ENCODE measurements at regions of chr12 and their contacts with region 1.

Region 1: GRCh38 chr12:56468216-56469006 is at the start of gene SPRYD4:
- DNase-seq: peak; percentile 70
- ATAC-seq: peak; percentile 92
- H3K4me3 ChIP-seq: peak within 1 kb of the TSS; percentile 76
- H3K27ac ChIP-seq: peak within 1 kb of the TSS; percentile 93
- H3K4me1 ChIP-seq: peaks cover 15% of the 10 kb centered on the region
- H3K27me3 ChIP-seq: no peaks in the 10 kb centered on the region
- CTCF ChIP-seq: peak; percentile 22 to 68 (median 27); a peak in 4 of 6 replicates
- EP300 ChIP-seq: no peak
- POLR2A ChIP-seq: peak; percentile 95
- RAD21 ChIP-seq: no peak
- polyA plus RNA-seq, gene SPRYD4: 4.8 to 6.0 TPM

Region 2: DNA sequence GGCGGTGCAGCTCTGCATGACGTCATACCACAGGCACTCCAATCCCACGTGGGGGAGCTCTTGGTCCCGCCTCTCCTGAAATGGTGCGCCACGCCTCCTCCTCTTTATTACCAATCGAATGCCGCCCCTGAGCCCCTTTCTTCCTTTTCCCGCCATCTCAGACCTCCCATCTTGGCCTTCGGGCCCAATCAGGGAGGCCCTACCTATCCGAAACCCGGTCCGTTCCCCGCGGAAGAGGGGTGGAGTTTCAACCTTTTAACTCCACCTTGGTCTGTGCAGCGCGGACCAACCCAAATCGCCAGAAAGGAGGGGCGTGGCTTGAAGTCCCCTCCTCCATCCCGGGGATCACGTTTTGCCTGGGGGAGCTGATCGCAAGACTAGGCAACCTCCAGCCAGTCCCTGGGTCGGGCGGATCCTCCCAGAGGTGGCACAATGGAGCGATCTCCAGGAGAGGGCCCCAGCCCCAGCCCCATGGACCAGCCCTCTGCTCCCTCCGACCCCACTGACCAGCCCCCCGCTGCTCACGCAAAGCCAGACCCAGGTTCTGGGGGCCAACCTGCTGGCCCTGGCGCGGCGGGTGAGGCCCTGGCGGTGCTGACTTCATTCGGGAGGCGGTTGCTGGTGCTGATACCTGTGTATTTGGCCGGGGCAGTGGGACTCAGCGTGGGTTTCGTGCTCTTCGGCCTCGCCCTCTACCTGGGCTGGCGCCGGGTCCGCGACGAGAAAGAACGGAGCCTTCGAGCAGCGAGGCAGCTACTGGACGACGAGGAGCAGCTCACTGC is 340.3 kb before region 1 on chr12 and contains the start of gene ESYT1:
- CTCF ChIA-PET with region 1: interaction called, 13 read pairs
- POLR2A ChIA-PET with region 1: interaction called, 5 read pairs
- RAD21 ChIA-PET with region 1: interaction called, 4 read pairs
- SMC1A ChIA-PET with region 1: interaction called, 4 read pairs
- in situ Hi-C with region 1: loop called (anchors 5 kb)
- intact Hi-C with region 1: loop called (anchors 5 kb)
- DNase-seq: peak; percentile 98
- ATAC-seq: peak; percentile 93
- H3K4me3 ChIP-seq: peak within 1 kb of the TSS; percentile 93
- H3K27ac ChIP-seq: peak within 1 kb of the TSS; percentile 72
- H3K4me1 ChIP-seq: peaks cover 24% of the 10 kb centered on the region
- H3K27me3 ChIP-seq: no peaks in the 10 kb centered on the region
- CTCF ChIP-seq: no peak
- EP300 ChIP-seq: peak in 1 of 2 experiments; percentile 17; a peak in 1 of 4 replicates
- POLR2A ChIP-seq: peak; percentile 87
- RAD21 ChIP-seq: no peak
- polyA plus RNA-seq, gene ESYT1: 55.6 to 57.9 TPM

Region 3: DNA sequence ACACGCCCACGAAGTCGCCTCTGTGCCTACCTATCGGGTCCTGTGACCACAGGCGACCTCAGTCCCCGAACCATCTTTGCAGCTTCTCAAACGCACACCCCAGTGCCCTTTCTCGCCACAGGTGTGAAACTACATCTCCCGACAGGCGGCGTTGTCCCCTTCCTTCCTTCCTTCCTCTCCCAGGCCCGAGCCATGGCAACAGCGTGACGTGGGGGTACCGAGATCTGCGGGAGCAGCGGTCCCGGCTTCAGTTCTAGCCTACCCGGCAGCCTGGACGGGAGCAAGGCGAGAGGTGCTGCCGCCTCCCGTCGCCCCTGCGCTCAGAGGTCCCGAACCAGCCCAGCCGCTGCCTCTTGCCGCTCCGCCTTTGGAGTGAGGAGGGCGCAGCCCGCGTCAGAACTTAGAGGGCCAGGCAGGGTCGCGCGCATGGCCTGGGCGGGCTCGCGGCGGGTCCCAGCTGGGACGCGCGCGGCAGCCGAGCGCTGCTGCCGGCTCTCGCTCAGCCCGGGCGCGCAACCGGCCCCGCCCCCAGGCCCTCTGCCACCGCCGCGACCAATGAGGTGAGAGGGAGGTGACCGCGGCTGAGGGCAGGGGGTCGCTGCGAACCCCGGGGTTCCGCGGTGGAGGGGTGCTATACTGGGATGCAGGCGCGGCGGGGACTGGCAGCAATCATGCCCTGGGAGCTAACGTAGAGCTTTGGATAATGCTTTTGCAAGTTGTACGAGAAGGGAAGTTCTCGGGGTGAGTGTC is 201.5 kb before region 1 on chr12 and contains the start of gene COQ10A:
- CTCF ChIA-PET with region 1: interaction called, 24 read pairs
- POLR2A ChIA-PET with region 1: no interaction called
- RAD21 ChIA-PET with region 1: interaction called, 5 read pairs
- SMC1A ChIA-PET with region 1: interaction called, 9 read pairs
- in situ Hi-C with region 1: no loop called
- intact Hi-C with region 1: loop called (anchors 10 kb)
- DNase-seq: peak; percentile 48
- ATAC-seq: peak; percentile 97
- H3K4me3 ChIP-seq: peak within 1 kb of the TSS; percentile 68
- H3K27ac ChIP-seq: peak within 1 kb of the TSS; percentile 41
- H3K4me1 ChIP-seq: peaks cover 4% of the 10 kb centered on the region
- H3K27me3 ChIP-seq: no peaks in the 10 kb centered on the region
- CTCF ChIP-seq: peak; percentile 53 to 62 (median 62)
- EP300 ChIP-seq: no peak
- POLR2A ChIP-seq: peak; percentile 97
- RAD21 ChIP-seq: peak; percentile 24; the same call in 1 of the 2 replicates
- polyA plus RNA-seq, gene COQ10A: 3.3 to 4.5 TPM

Region 4: DNA sequence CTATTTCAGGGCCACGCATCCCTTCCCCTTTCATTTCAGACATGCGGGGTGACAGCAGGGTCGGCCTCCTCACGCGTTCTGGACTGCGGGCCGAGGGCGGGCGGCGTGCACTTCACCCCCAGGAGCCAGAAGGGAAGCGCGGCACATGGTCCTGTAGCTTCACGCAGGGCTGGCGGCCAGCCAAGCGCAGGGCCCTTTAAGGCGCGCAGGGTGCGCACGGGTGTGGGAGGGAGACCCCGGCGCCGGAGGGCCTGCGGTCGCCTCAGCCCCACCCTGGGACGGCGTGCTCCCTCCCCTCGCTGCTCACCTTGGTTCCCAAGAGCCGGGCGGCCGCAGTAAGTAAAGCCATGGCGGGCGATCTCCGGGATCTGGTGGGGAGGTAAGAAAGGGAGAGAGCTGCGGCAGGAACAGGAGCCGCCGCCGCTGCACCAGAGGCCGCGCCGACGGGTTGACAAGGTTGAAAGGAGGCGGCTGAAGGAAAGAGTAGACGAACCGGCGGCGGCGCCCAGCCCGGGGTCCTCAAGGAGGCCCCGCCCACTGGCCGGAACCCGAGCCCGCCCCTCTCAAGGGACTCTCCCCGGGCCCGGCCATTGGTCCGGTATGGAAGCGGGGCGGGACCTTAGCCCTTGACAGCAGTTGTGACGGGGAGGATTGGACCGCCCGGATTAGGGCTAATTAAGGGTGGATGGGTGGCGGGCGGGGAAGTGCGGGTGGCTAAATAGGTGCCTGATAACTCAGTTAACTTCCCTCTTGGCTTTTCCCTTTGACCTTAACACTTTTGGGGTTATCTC is 168.4 kb before region 1 on chr12 and contains the start of gene CS:
- CTCF ChIA-PET with region 1: interaction called, 10 read pairs
- POLR2A ChIA-PET with region 1: interaction called, 6 read pairs
- RAD21 ChIA-PET with region 1: interaction called, 3 read pairs
- SMC1A ChIA-PET with region 1: interaction called, 14 read pairs
- in situ Hi-C with region 1: no loop called
- intact Hi-C with region 1: no loop called
- DNase-seq: peak; percentile 71
- ATAC-seq: peak; percentile 95
- H3K4me3 ChIP-seq: peak within 1 kb of the TSS; percentile 93
- H3K27ac ChIP-seq: peak within 1 kb of the TSS; percentile 85
- H3K4me1 ChIP-seq: peaks cover 32% of the 10 kb centered on the region
- H3K27me3 ChIP-seq: no peaks in the 10 kb centered on the region
- CTCF ChIP-seq: no peak
- EP300 ChIP-seq: no peak
- POLR2A ChIP-seq: peak; percentile 84
- RAD21 ChIP-seq: no peak
- polyA plus RNA-seq, gene CS: 64.9 to 104 TPM

Region 5: GRCh38 chr12:56346703-56347102 is 121.7 kb before region 1 on chr12:
- CTCF ChIA-PET with region 1: interaction called, 11 read pairs
- POLR2A ChIA-PET with region 1: no interaction called
- RAD21 ChIA-PET with region 1: no interaction called
- SMC1A ChIA-PET with region 1: interaction called, 7 read pairs
- in situ Hi-C with region 1: no loop called
- intact Hi-C with region 1: no loop called
- DNase-seq: no peak
- ATAC-seq: peak; percentile 40
- H3K4me3 ChIP-seq: no peak overlapping the region
- H3K27ac ChIP-seq: no peak overlapping the region
- H3K4me1 ChIP-seq: peaks cover 3% of the 10 kb centered on the region
- H3K27me3 ChIP-seq: no peaks in the 10 kb centered on the region
- CTCF ChIP-seq: peak in 2 of 3 experiments; percentile 5 to 17; a peak in 1 of 6 replicates
- EP300 ChIP-seq: no peak
- POLR2A ChIP-seq: 0 out of 2 replicates have a peak, but pooled peaks have one; percentile 0
- RAD21 ChIP-seq: no peak

Region 6: DNA sequence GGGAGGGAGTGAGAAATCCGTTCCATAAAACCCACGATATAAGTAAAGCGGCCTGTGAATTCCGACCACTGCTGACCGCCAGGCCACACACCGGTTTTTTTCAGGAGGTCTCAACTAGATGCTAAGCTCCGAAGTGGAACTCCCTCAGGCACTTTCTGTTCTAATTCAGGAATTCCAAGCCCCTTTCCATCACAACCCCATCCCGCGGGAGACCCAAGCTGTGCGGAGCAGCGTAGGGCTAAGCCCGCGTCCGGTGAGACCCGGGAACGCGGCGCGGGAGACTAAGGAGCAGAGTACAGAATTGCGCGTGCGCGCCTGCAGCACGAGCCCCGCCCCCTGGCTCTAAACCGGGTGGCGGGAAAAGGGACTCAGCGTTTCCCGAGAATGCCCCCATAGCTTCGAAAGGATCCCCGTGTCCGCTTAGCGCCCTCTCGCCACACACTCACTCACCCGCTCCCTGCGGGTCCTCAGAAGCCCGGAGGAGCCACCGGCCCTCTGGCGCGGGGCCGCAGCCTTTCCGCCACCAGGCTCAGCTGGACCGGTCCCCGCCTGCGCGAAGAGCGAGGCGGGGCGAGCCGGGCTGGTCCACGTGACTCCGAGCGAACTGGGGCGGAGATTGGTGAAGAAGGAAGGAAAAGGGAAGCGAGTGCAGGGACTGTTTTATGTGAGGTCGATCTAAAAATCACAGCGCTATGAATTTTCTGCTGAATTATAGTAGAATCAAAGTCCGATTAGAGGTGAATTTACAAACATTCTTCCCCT is 19.4 kb before region 1 on chr12 and contains the start of gene TIMELESS:
- CTCF ChIA-PET with region 1: interaction called, 89 read pairs
- POLR2A ChIA-PET with region 1: interaction called, 6 read pairs
- RAD21 ChIA-PET with region 1: interaction called, 12 read pairs
- SMC1A ChIA-PET with region 1: interaction called, 14 read pairs
- in situ Hi-C with region 1: no loop called
- intact Hi-C with region 1: no loop called
- DNase-seq: peak; percentile 77
- ATAC-seq: peak; percentile 98
- H3K4me3 ChIP-seq: peak within 1 kb of the TSS; percentile 91
- H3K27ac ChIP-seq: peak within 1 kb of the TSS; percentile 75
- H3K4me1 ChIP-seq: no peaks in the 10 kb centered on the region
- H3K27me3 ChIP-seq: no peaks in the 10 kb centered on the region
- CTCF ChIP-seq: no peak
- EP300 ChIP-seq: no peak
- POLR2A ChIP-seq: peak; percentile 91
- RAD21 ChIP-seq: no peak
- polyA plus RNA-seq, gene TIMELESS: 10.4 to 20.5 TPM

Region 7: DNA sequence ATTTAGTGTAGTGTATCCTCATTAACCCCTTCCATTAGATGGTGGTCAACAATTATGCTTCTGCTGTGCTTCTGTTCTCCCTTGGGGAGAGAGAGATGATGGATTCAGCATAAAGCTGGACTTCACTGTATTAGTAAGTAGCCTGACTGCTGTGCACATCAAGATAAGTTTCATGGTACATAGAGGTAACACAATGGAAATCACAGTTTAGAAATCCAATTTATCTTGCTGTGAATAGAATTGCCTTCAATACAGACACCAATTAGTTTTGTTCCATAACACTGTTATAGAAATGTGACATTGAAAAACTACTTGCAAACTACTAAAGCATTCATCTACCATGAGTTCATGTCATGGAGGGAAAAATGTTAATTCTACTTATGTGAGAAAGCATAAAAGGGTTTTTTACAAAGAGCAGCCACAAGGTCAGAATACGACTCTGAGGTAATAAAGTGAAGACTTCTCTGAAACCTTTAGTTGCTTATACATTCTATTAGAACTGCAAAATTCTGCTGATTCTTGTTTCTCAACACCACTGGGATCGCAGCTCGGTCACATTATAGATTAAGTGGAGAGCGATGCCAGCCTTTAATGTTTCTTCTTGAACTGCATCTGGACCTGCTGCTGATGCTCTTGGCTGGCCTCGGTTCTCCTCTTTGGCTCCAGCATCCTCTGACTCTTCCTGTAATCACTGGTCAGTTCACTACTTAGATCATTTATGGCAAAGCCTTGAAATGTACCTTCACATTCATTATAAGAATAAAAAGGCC is 1663.8 kb after region 1 on chr12:
- CTCF ChIA-PET with region 1: no interaction called
- POLR2A ChIA-PET with region 1: no interaction called
- RAD21 ChIA-PET with region 1: no interaction called
- SMC1A ChIA-PET with region 1: no interaction called
- in situ Hi-C with region 1: no loop called
- intact Hi-C with region 1: no loop called
- DNase-seq: no peak
- ATAC-seq: no peak
- H3K4me3 ChIP-seq: no peak overlapping the region
- H3K27ac ChIP-seq: no peak overlapping the region
- H3K4me1 ChIP-seq: no peaks in the 10 kb centered on the region
- H3K27me3 ChIP-seq: no peaks in the 10 kb centered on the region
- CTCF ChIP-seq: no peak
- EP300 ChIP-seq: no peak
- POLR2A ChIP-seq: no peak
- RAD21 ChIP-seq: no peak

Measured in GM12878 (cell line).